Ascending aorta (tissue), 2 donors: ENCODE measurements at regions of chr2 and their contacts with region 1.

Region 1: DNA sequence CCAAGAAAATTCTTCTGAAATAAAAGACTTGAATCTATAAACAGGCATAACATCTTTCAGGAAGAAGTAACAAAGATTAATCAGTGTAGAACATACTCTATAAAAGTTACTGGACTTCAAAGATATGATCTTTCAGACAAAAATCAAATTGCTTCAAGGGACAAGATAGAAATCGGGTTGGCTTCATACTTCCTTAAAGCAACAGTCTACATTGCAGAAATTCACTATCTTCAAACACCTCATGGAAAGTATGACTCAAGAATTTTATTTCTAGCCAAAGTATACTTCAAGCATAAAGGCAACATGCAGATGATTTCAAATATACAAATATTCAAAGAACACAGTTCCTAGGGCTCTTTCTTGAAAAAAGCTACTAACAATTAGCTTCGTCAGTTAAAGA is 240.7 kb downstream of the SRBD1 start:
- DNase-seq: no peak
- H3K4me3 ChIP-seq: no peak overlapping the region
- H3K27ac ChIP-seq: no peak overlapping the region
- H3K4me1 ChIP-seq: no peaks in the 10 kb centered on the region
- H3K27me3 ChIP-seq: no peaks in the 10 kb centered on the region
- CTCF ChIP-seq: no peak

Region 2: GRCh38 chr2:45330637-45331409 is 39.5 kb before region 1 on chr2:
- intact Hi-C with region 1: no loop called
- DNase-seq: no peak
- H3K4me3 ChIP-seq: no peak overlapping the region
- H3K27ac ChIP-seq: no peak overlapping the region
- H3K4me1 ChIP-seq: no peaks in the 10 kb centered on the region
- H3K27me3 ChIP-seq: no peaks in the 10 kb centered on the region
- CTCF ChIP-seq: no peak

Region 3: DNA sequence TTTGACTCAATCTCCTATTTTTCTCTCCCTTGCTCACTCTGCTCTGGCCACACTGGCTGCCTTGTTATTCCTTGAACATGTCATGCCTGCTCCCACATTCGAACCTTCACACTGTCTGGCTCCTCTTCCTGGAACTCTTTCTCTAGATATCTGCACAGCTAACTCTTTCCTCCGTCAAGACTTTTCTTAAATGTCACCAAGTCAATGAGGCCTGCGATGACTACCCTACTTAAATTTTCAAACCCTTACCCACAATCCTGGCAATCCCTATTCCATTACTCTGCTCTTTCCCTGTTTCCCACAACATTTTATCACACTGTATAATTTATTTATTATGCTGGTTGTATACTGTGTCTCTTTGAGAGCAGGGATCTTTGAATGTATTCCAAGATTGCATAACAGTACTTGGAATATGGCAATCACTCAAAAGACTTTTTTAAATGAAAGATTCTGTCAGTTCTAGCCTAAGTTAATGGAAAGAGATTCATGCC is 34.5 kb after region 1 on chr2:
- intact Hi-C with region 1: loop called (anchors 1 kb)
- DNase-seq: no peak
- H3K4me3 ChIP-seq: no peak overlapping the region
- H3K27ac ChIP-seq: no peak overlapping the region
- H3K4me1 ChIP-seq: no peaks in the 10 kb centered on the region
- H3K27me3 ChIP-seq: no peaks in the 10 kb centered on the region
- CTCF ChIP-seq: no peak

Region 4: DNA sequence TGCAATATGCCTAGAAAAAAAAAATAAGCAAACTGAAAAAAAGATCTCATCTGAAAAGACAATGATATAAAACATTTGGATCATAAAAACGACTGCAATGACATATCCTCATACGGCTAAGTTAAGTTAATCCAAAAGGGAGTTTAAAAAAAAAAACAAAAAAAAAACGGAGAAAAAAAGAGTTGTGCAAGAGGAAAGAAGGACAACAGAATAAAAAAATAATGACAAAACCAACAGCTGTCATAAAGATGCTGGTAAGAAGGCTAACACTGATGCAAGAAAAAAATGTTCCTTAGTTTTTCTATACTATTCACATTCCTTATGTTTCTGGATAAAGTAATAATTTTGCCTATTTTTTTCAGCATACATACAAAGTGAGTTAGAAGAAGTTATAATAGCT is 48.2 kb after region 1 on chr2:
- intact Hi-C with region 1: no loop called
- DNase-seq: no peak
- H3K4me3 ChIP-seq: no peak overlapping the region
- H3K27ac ChIP-seq: no peak overlapping the region
- H3K4me1 ChIP-seq: no peaks in the 10 kb centered on the region
- H3K27me3 ChIP-seq: no peaks in the 10 kb centered on the region
- CTCF ChIP-seq: no peak

Region 5: DNA sequence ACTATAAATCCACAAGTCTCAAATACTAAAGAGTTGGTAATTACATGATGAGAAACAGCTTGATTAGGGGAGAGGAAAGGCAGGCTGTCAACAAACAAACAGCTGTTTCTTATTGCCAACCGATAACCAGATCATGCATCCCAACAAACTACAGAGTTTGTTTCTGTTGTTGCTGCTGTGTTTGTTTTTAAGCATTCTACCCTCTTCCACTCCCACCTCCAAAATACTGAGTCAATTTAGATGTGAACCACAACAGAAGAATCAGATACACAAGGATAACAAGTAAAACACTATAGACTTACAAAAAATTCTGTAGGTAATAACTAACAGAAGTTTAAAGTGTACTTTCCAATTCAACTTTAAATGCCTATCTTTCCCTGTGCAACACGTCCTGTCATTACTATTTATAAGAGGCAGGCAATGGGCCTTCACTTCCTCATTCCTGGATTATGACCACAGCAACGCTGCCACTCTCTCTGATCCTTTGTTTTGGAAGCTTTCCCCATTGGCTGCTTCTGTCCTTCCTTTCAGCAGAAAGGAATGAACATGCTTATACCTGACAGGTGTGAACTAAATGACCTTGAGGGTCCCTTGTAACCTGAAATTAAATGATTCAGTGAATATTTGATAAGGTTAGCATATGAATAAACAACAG is 88.7 kb after region 1 on chr2:
- intact Hi-C with region 1: no loop called
- DNase-seq: peak; percentile 9 to 69
- H3K4me3 ChIP-seq: no peak overlapping the region
- H3K27ac ChIP-seq: peak overlapping the region; percentile 72 to 81
- H3K4me1 ChIP-seq: peaks cover 0 to 15% of the 10 kb centered on the region in 2 donors
- H3K27me3 ChIP-seq: no peaks in the 10 kb centered on the region
- CTCF ChIP-seq: no peak